ENCODE measurements at regions of chr11 and their contacts with region 1.

Region 1: GRCh38 chr11:17161515-17161914 is 46.3 kb downstream of the PIK3C2A start:
- DNase-seq: peak; percentile 67
- H3K4me3 ChIP-seq: no peak overlapping the region
- H3K27ac ChIP-seq: no peak overlapping the region
- H3K4me1 ChIP-seq: peaks cover 75% of the 10 kb centered on the region
- H3K27me3 ChIP-seq: no peaks in the 10 kb centered on the region
- CTCF ChIP-seq: no peak
- POLR2A ChIP-seq: no peak

Region 2: DNA sequence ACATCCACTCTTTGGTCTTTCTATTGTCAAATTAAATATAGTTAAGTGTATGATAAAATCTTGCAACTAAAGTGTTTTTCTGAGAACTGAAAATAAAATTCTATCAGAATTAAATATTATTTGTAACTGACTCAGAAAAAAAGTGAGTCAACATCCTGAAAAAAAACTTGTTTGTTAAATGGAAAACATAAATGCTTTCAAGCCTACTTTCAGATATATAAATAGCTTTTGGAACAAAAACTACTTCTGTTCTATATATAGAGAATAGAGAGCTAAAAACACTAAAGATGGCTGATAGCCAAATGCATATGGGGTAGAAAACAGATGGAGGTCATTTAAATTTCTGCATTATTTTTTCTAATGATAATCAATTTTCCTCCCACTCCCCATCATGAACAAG is 15.5 kb before region 1 on chr11:
- CTCF ChIA-PET with region 1: interaction called, 5 read pairs
- POLR2A ChIA-PET with region 1: interaction called, 3 read pairs
- dilution Hi-C with region 1: no loop called
- intact Hi-C with region 1: loop called (anchors 2 kb)
- DNase-seq: no peak
- H3K4me3 ChIP-seq: no peak overlapping the region
- H3K27ac ChIP-seq: peak overlapping the region; percentile 35
- H3K4me1 ChIP-seq: peaks cover 24% of the 10 kb centered on the region
- H3K27me3 ChIP-seq: no peaks in the 10 kb centered on the region
- CTCF ChIP-seq: no peak
- POLR2A ChIP-seq: no peak

Region 3: DNA sequence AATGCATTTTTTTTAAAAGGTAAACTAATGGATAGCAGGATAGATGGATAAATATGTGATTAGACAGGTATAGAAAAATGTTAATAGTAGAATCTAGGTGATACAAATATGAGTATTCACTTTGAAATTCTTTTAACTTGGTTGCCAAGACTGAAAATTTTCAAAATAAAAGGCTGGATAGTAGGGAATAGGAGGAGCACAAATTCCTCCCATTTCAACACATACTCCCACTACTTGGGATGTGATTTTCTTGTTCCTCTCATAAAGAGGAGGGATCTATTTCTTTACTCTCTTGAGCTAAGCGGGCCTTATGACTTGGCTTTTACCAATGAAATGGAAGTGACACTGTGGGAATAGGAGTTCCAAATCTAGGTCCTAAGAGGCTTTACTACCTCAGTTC is 10.4 kb after region 1 on chr11:
- CTCF ChIA-PET with region 1: interaction called, 6 read pairs
- POLR2A ChIA-PET with region 1: no interaction called
- dilution Hi-C with region 1: no loop called
- intact Hi-C with region 1: loop called (anchors 1 kb)
- DNase-seq: no peak
- H3K4me3 ChIP-seq: no peak overlapping the region
- H3K27ac ChIP-seq: peak overlapping the region; percentile 59
- H3K4me1 ChIP-seq: peaks cover 14% of the 10 kb centered on the region
- H3K27me3 ChIP-seq: no peaks in the 10 kb centered on the region
- CTCF ChIP-seq: no peak
- POLR2A ChIP-seq: no peak